Upper lobe of right lung (tissue), 1 donor: ENCODE measurements at regions of chr22 and their contacts with region 1.

Region 1: DNA sequence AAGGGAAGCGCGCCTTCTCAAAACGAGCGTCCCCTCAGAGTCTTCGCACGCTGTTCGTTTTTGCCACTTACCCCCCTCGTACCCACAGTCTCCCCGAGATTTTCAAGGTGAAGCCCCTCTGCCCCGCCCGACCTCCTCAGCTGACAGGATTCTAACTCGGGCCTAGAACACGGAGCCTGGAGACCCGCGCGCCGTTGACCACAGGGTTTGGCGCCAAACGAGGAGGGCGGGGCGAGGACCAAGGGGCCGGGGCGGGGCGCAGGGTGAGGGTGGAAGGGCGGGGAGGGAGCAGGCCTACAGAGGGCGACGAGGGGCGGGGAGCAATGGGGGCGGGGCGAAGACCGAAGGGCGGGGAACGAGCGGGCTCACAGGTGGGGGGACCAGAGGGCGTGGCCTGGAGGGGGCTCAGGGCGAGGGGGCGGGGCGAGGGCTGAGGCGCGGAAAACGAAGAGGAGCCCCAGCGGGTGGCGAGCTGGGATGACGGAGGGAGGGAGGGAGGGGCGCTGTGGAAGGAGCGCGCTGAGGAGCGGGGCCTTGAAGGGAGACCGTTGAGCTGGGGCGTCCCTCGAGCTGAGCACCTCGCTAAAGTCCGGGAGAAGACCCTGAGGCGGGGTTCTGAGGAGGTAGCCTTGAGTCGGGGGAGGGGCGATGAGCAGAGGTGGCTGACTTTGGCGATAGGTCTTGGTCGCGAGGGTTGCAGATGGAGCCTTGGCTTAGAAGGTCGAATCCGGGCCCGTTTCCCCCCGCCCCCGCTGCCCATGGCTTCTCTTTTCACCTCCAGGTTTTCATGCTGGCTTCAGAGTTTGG is at the start of gene DMC1:
- DNase-seq: peak; percentile 97
- ATAC-seq: peak; percentile 99
- H3K4me3 ChIP-seq: peak within 1 kb of the TSS; percentile 59
- H3K27ac ChIP-seq: no peak within 1 kb of the TSS
- H3K4me1 ChIP-seq: peaks cover 6% of the 10 kb centered on the region
- H3K27me3 ChIP-seq: no peaks in the 10 kb centered on the region
- CTCF ChIP-seq: no peak
- total RNA-seq, gene DMC1: not detected

Region 2: GRCh38 chr22:38051900-38052862 is 518.0 kb before region 1 on chr22:
- intact Hi-C with region 1: loop called (anchors 5 kb)
- DNase-seq: peak; percentile 88
- ATAC-seq: peak; percentile 82
- H3K4me3 ChIP-seq: no peak overlapping the region
- H3K27ac ChIP-seq: no peak overlapping the region
- H3K4me1 ChIP-seq: no peaks in the 10 kb centered on the region
- H3K27me3 ChIP-seq: no peaks in the 10 kb centered on the region
- CTCF ChIP-seq: peak; percentile 84